PC-9 (cell line): ENCODE measurements at regions of chr5 and their contacts with region 1.

Region 1: DNA sequence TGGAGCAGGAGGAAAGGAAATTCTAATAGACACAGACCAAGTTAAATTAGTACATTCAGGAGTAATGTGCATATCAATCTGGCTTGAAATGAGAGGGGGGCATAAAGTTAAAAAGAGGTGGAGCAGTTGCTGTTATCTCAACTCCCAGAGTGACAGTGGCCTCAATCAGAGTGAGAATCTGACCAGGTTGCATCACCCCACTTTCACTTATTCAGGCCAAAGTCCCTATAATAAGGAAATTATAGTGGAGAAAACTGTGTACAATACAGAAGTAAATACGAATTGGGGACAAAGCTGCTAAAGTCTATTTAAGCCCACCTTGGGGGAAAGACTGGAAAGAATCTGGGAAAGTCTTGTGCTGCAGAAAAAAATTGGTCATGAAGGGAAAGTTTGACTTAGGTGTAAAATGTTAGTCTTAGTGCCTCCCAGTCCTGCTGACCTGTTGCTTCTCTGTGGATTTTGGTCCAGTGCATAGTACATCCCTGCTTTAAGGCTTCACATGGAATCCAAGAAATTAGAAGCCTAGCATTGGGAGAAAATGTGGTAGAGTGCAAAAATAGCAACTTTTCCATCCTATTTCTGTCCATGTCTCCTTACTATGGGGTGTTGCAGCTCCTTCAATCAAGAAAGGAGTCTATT is 27.9 kb downstream of the MROH2B start:
- DNase-seq: no peak
- H3K4me3 ChIP-seq: no peak overlapping the region
- H3K27ac ChIP-seq: no peak overlapping the region
- H3K4me1 ChIP-seq: no peaks in the 10 kb centered on the region
- H3K27me3 ChIP-seq: no peaks in the 10 kb centered on the region
- CTCF ChIP-seq: no peak

Region 2: GRCh38 chr5:41102341-41102740 is 59.1 kb after region 1 on chr5:
- CTCF ChIA-PET with region 1: no interaction called
- POLR2A ChIA-PET with region 1: no interaction called
- intact Hi-C with region 1: loop called (anchors 5 kb)
- DNase-seq: no peak
- H3K4me3 ChIP-seq: no peak overlapping the region
- H3K27ac ChIP-seq: no peak overlapping the region
- H3K4me1 ChIP-seq: no peaks in the 10 kb centered on the region
- H3K27me3 ChIP-seq: no peaks in the 10 kb centered on the region
- CTCF ChIP-seq: no peak